ENCODE measurements at regions of chr2 and their contacts with region 1.

Region 1: GRCh38 chr2:219229305-219230058 is at the starts of genes ANKZF1 and ATG9A:
- DNase-seq: peak; percentile 100
- ATAC-seq: peak; percentile 98
- H3K4me3 Mint-ChIP-seq: peak within 1 kb of the TSS; percentile 95
- H3K27ac Mint-ChIP-seq: peak within 1 kb of the TSS; percentile 97
- H3K4me1 Mint-ChIP-seq: peaks cover 39% of the 10 kb centered on the region
- H3K27me3 Mint-ChIP-seq: no peaks in the 10 kb centered on the region
- CTCF ChIP-seq: no peak
- total RNA-seq, gene ANKZF1: 216 to 217 TPM
- total RNA-seq, gene ATG9A: 54.8 to 58.7 TPM

Region 2: DNA sequence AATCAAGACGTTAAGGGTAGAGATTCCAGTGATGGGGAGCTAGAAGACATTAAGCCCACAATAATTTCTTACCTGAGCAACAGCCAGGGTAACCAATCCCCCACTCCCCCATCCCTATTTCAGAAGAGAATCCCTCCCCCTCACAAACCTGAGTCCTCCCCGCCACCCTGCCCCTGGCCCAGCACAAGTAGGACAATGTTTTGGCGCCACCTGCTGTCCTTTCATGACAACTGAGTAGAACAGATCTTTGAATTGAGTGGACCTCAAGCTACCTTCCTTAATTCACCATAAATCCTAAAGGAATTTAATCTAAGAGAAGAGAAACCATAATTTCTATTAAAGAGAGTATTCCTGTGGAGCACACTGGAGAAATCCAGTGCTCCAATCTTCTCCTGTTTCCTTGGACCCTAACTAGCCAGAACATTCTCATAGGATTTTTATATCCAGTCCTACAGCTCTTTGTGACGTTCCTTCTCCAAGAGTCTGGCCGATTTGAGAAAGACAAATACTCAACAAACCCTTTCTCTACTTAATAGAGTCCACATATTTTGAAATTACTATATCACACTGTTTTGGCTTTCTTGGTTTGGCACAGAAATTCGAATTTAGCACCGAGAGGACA is 109.9 kb before region 1 on chr2:
- CTCF ChIA-PET with region 1: no interaction called
- POLR2A ChIA-PET with region 1: no interaction called
- intact Hi-C with region 1: no loop called
- DNase-seq: peak; percentile 80
- ATAC-seq: peak; percentile 78
- H3K4me3 Mint-ChIP-seq: no peak overlapping the region
- H3K27ac Mint-ChIP-seq: no peak overlapping the region
- H3K4me1 Mint-ChIP-seq: peaks cover 11% of the 10 kb centered on the region
- H3K27me3 Mint-ChIP-seq: no peaks in the 10 kb centered on the region
- CTCF ChIP-seq: peak; percentile 73

Region 3: GRCh38 chr2:219171231-219171651 is 58.2 kb before region 1 on chr2:
- CTCF ChIA-PET with region 1: interaction called, 12 read pairs
- POLR2A ChIA-PET with region 1: interaction called, 22 read pairs
- intact Hi-C with region 1: no loop called
- DNase-seq: peak; percentile 42
- ATAC-seq: peak; percentile 53
- H3K4me3 Mint-ChIP-seq: no peak overlapping the region
- H3K27ac Mint-ChIP-seq: no peak overlapping the region
- H3K4me1 Mint-ChIP-seq: peaks cover 34% of the 10 kb centered on the region
- H3K27me3 Mint-ChIP-seq: no peaks in the 10 kb centered on the region
- CTCF ChIP-seq: peak; percentile 94

Region 4: DNA sequence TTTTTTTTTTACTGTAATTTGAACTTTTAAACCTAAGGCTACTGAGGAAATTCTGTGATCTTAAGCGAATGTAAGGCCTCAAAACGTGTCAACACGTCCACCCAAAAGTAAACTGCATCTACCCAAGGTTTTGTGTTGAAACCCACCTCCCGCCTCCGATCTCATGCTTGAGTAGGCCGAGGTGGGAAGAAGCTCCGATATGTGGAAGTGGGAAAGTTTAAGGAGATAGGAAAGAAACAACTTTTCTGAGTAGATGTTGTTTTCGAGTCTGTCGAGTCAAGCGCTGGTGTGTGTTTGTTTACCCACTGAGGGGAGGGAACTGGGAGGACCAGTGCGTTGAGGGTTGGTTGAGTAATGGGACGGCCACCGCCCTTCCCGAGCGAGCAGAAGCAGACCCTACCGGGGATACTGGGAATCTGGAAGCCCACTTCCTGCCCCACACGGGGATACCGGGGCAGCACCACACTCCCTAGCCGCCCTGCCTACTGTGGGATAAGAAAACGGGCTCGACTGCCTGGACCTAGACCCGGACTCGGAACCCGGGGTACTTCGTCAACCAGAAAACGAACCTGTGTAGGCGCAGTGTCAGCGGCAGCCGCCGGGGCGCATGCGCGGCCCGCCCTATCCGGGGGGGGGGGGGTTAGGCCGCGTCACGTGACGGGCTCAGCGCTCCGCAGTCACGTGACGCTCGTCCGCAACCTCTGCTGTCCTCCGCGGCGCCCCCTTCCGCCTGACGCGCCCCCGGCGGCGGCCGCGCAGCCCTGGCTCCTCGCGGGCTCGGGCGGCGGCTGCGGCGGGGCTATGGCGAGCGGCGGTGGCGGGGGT is 51.7 kb before region 1 on chr2 and contains the start of gene RETREG2:
- CTCF ChIA-PET with region 1: interaction called, 12 read pairs
- POLR2A ChIA-PET with region 1: interaction called, 22 read pairs
- intact Hi-C with region 1: no loop called
- DNase-seq: peak; percentile 82
- ATAC-seq: peak; percentile 46
- H3K4me3 Mint-ChIP-seq: peak within 1 kb of the TSS; percentile 97
- H3K27ac Mint-ChIP-seq: peak within 1 kb of the TSS; percentile 97
- H3K4me1 Mint-ChIP-seq: peaks cover 57% of the 10 kb centered on the region
- H3K27me3 Mint-ChIP-seq: no peaks in the 10 kb centered on the region
- CTCF ChIP-seq: peak; percentile 40
- total RNA-seq, gene RETREG2: 63.8 to 67.8 TPM

Region 5: DNA sequence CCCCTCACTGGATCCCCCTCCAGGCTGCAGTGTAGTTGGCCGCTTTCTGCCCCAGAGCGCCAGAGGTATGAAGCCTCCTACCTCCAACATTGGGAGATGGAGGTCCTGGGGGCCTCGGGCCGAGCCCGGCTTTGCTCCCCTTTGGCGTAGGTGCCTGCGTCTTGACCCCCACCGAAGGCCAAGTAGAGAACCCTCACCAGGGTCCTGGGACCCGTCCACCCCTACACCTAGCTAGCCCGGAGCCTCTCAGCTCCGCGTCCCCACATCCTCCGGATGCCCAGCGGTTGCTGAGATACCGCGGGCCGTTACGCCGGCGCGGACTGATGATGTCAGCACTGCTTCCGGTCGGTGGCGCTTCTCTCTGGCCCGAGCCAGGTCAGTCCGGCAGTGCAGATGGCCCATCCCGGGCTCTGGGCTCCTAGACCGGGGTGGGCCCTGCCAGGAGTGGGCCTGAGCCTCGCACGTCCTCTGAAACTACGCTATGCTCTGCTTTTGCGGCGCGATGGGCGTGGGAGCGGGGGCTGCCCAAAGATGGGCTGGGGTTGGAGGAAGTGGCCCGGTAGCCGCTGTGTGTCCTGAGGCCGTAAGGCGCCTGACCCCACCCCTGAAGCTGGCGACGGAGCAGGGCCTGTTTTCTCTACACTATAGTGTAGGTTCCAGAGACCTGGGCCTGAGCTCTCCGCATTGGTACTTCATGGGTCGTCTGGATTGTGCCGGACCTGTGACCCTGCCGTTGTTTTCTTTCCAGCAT is 15.8 kb after region 1 on chr2 and contains the starts of genes GLB1L and STK16:
- CTCF ChIA-PET with region 1: interaction called, 15 read pairs
- POLR2A ChIA-PET with region 1: interaction called, 239 read pairs
- intact Hi-C with region 1: no loop called
- DNase-seq: peak; percentile 93
- ATAC-seq: peak; percentile 58
- H3K4me3 Mint-ChIP-seq: peak within 1 kb of the TSS; percentile 98
- H3K27ac Mint-ChIP-seq: peak within 1 kb of the TSS; percentile 99
- H3K4me1 Mint-ChIP-seq: peaks cover 61% of the 10 kb centered on the region
- H3K27me3 Mint-ChIP-seq: no peaks in the 10 kb centered on the region
- CTCF ChIP-seq: no peak
- total RNA-seq, gene GLB1L: 1.2 to 2.8 TPM
- total RNA-seq, gene STK16: 34.4 to 35.4 TPM

Region 6: GRCh38 chr2:219253753-219254590 is 24.5 kb after region 1 on chr2 and contains the start of gene TUBA4A:
- CTCF ChIA-PET with region 1: interaction called, 12 read pairs
- POLR2A ChIA-PET with region 1: interaction called, 239 read pairs
- intact Hi-C with region 1: no loop called
- DNase-seq: peak; percentile 92
- ATAC-seq: peak; percentile 73
- H3K4me3 Mint-ChIP-seq: peak within 1 kb of the TSS; percentile 77
- H3K27ac Mint-ChIP-seq: peak within 1 kb of the TSS; percentile 94
- H3K4me1 Mint-ChIP-seq: peaks cover 46% of the 10 kb centered on the region
- H3K27me3 Mint-ChIP-seq: no peaks in the 10 kb centered on the region
- CTCF ChIP-seq: no peak
- total RNA-seq, gene TUBA4A: 226 TPM

Region 7: GRCh38 chr2:219278655-219279516 is 49.4 kb after region 1 on chr2 and contains the start of gene DNAJB2:
- CTCF ChIA-PET with region 1: interaction called, 11 read pairs
- POLR2A ChIA-PET with region 1: interaction called, 12 read pairs
- intact Hi-C with region 1: no loop called
- DNase-seq: peak; percentile 100
- ATAC-seq: peak; percentile 86
- H3K4me3 Mint-ChIP-seq: peak within 1 kb of the TSS; percentile 80
- H3K27ac Mint-ChIP-seq: peak within 1 kb of the TSS; percentile 95
- H3K4me1 Mint-ChIP-seq: peaks cover 45% of the 10 kb centered on the region
- H3K27me3 Mint-ChIP-seq: no peaks in the 10 kb centered on the region
- CTCF ChIP-seq: no peak
- total RNA-seq, gene DNAJB2: 61.8 to 63.3 TPM

Region 8: GRCh38 chr2:219331560-219332213 is 102.2 kb after region 1 on chr2:
- CTCF ChIA-PET with region 1: no interaction called
- POLR2A ChIA-PET with region 1: no interaction called
- intact Hi-C with region 1: no loop called
- DNase-seq: peak; percentile 35
- ATAC-seq: peak; percentile 45
- H3K4me3 Mint-ChIP-seq: no peak overlapping the region
- H3K27ac Mint-ChIP-seq: no peak overlapping the region
- H3K4me1 Mint-ChIP-seq: no peaks in the 10 kb centered on the region
- H3K27me3 Mint-ChIP-seq: peaks cover 49% of the 10 kb centered on the region
- CTCF ChIP-seq: no peak

Region 9: DNA sequence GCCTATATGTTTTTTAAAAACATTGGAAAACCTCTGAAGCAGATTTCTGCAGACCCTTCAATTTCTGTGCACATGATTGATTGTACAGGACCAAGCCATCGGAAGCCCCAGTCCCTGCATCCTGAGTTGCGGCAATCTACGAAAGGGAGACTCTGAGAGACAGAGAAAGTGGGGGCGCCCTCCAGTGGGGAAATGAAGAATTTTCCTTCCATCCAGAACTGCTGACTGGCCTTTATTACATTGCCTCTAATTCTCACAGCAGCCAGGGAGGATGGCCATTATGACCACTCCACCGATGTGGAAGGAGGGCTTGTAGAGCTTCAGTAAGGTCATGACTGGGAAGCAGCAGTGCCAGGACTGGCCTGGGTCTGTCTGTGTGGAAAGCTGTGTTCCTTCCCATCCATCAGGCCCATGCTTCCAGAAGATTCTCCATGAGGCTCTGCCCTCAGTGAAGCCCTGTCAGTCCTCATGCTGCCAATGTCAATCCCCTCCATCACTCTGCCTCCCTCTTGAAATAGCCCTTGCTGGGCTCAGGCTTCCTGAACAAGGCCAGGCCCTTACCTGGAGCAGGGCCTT is 123.1 kb after region 1 on chr2:
- CTCF ChIA-PET with region 1: no interaction called
- POLR2A ChIA-PET with region 1: no interaction called
- intact Hi-C with region 1: no loop called
- DNase-seq: peak; percentile 89
- ATAC-seq: peak; percentile 95
- H3K4me3 Mint-ChIP-seq: no peak overlapping the region
- H3K27ac Mint-ChIP-seq: no peak overlapping the region
- H3K4me1 Mint-ChIP-seq: no peaks in the 10 kb centered on the region
- H3K27me3 Mint-ChIP-seq: peaks cover 43% of the 10 kb centered on the region
- CTCF ChIP-seq: peak; percentile 90